Activated CD4-positive, alpha-beta memory T cell treated with anti-CD3 and anti-CD28 coated beads for 36 hours (primary cell): ENCODE measurements at regions of chr6 and their contacts with region 1.

Region 1: DNA sequence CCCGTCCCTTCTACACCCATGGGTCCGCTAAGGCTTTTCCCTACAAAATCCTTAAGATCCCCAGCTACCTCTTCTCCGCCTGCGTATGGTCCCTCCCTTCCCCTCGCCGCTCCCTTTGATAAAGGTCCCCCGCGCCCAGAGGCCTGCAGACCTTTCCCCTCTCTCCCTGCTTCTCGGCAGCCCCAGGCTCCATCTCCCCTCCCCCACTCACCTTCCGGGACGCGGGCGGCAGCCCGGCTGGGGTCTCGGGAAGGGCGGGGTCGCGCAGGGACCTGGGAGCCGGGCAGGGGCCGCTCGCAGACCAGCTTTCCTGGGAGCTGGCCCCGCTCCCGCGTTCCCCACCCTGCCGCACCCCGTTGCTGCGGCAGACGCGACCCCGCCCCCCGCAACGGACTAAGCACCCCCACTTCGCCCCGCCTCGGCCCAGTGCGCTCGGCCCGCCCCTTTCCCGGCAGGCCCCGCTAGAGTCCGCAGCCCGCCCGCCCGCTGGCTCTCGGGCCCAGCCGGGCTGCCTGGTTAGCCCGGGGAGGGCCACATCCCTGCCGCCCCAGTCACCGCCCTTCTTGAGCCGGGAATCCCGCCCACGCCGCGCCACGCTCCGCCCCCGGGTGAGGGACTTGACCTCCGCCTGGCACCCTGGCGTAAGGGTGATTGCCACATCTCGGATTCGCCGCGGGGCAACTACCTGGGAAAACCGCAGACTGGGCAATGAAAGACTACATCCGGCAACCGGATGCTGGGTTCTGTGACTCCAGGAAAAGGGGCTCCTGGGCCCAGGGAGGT is at the start of gene FLOT1:
- DNase-seq: peak; percentile 99
- H3K4me3 Mint-ChIP-seq: peak within 1 kb of the TSS; percentile 99
- H3K27ac Mint-ChIP-seq: peak within 1 kb of the TSS; percentile 97
- H3K4me1 Mint-ChIP-seq: peaks cover 62% of the 10 kb centered on the region
- H3K27me3 Mint-ChIP-seq: no peaks in the 10 kb centered on the region
- total RNA-seq, gene FLOT1: 226 to 231 TPM

Region 2: DNA sequence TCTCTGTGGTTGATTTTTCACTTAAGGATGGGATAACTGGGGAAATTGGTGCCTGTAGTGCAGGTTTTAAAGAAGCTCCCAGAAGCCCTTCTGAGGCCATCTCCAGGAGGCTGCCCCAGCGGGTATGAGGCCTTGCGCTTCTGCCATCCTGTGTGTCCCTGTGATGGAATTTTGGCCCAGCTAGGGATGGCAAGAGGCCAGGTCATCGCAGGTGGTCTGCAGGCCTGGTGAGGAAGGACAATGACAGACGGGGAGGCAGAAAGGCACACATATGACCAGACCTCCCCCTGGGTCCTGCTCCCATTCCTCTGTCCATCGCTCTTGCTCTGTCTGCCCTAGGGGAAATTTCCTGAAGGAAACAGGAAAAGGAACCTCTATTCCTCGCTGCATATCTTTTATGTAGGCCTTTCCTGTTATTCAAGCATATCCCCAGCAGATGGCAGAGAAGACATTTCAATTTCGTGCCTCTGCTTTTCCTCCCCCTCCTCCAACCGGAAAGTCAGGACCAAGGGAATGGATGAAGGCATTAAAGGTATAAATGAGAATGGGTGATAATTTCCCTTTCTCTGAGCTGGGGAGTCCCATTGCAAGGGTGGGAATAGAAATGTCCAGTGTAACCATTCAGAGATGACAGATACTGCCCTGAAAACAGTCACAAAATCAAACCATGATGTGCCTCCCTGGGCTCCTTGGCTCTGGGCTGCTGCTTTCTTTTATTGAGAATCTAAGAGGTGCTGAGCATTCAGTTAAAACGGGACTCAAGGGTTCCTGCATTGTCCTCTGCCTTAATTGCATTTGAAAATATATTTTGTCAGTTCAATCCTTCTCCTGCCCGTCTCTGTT is 1036.9 kb before region 1 on chr6:
- CTCF ChIA-PET with region 1: no interaction called
- POLR2A ChIA-PET with region 1: no interaction called
- intact Hi-C with region 1: no loop called
- DNase-seq: no peak
- H3K4me3 Mint-ChIP-seq: peak overlapping the region; percentile 6
- H3K27ac Mint-ChIP-seq: no peak overlapping the region
- H3K4me1 Mint-ChIP-seq: peaks cover 50% of the 10 kb centered on the region
- H3K27me3 Mint-ChIP-seq: peaks cover 13% of the 10 kb centered on the region

Region 3: DNA sequence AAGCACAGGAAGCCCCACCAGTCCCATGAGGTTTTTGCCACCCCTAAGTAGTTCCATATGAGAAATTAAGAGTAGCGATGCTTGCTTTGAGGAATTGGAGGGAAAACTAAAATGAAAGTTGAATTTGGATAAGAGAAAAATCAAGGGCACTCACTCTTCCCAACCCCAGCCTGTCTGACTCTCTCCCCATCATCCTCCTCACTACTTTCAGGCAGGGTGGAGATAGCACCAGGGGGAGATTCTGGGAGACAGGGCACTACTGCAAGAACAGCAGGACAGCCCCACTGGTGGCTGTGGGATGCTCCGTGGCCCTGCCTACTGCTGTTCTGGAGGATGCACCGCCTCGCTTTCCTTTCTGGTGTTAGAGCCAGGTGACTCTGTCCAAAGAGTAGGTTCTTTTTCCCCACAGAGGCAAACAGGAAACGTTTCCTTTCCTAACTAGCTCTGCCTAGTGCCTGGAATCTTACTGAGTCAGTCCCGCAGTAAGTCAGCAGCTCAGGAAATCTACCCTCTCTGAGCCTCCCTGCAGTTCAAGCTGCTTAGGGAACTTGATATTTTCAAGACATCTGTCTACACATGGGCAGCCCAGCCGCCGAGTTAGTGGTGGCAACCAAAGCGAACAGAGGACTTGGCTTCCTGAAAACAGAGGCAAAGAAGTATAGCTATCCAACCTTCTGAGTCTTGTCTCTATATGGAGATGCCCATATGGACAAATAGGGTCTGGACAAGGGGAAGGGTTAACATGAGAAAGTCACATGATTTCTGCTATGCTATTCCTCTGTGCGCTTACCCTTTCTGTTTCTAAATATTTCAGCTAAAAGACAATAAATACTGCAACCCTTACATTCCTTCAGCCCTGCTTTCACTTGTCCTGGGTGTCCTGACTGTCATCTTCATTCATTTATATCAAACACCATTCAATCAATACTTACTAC is 241.8 kb before region 1 on chr6:
- CTCF ChIA-PET with region 1: no interaction called
- POLR2A ChIA-PET with region 1: no interaction called
- intact Hi-C with region 1: no loop called
- DNase-seq: no peak
- H3K4me3 Mint-ChIP-seq: peak overlapping the region; percentile 64
- H3K27ac Mint-ChIP-seq: peak overlapping the region; percentile 58
- H3K4me1 Mint-ChIP-seq: peaks cover 43% of the 10 kb centered on the region
- H3K27me3 Mint-ChIP-seq: no peaks in the 10 kb centered on the region

Region 4: GRCh38 chr6:30678964-30679726 is 63.4 kb before region 1 on chr6:
- CTCF ChIA-PET with region 1: interaction called, 628 read pairs
- POLR2A ChIA-PET with region 1: interaction called, 5 read pairs
- intact Hi-C with region 1: loop called (anchors 1 kb)
- DNase-seq: peak; percentile 94
- H3K4me3 Mint-ChIP-seq: peak overlapping the region; percentile 100
- H3K27ac Mint-ChIP-seq: peak overlapping the region; percentile 99
- H3K4me1 Mint-ChIP-seq: peaks cover 16% of the 10 kb centered on the region
- H3K27me3 Mint-ChIP-seq: no peaks in the 10 kb centered on the region

Region 5: GRCh38 chr6:30787954-30788353 is 45.4 kb after region 1 on chr6:
- CTCF ChIA-PET with region 1: interaction called, 3 read pairs
- POLR2A ChIA-PET with region 1: interaction called, 14 read pairs
- intact Hi-C with region 1: loop called (anchors 2 kb)
- DNase-seq: peak; percentile 58
- H3K4me3 Mint-ChIP-seq: peak overlapping the region; percentile 48
- H3K27ac Mint-ChIP-seq: peak overlapping the region; percentile 89
- H3K4me1 Mint-ChIP-seq: peaks cover 61% of the 10 kb centered on the region
- H3K27me3 Mint-ChIP-seq: no peaks in the 10 kb centered on the region

Region 6: DNA sequence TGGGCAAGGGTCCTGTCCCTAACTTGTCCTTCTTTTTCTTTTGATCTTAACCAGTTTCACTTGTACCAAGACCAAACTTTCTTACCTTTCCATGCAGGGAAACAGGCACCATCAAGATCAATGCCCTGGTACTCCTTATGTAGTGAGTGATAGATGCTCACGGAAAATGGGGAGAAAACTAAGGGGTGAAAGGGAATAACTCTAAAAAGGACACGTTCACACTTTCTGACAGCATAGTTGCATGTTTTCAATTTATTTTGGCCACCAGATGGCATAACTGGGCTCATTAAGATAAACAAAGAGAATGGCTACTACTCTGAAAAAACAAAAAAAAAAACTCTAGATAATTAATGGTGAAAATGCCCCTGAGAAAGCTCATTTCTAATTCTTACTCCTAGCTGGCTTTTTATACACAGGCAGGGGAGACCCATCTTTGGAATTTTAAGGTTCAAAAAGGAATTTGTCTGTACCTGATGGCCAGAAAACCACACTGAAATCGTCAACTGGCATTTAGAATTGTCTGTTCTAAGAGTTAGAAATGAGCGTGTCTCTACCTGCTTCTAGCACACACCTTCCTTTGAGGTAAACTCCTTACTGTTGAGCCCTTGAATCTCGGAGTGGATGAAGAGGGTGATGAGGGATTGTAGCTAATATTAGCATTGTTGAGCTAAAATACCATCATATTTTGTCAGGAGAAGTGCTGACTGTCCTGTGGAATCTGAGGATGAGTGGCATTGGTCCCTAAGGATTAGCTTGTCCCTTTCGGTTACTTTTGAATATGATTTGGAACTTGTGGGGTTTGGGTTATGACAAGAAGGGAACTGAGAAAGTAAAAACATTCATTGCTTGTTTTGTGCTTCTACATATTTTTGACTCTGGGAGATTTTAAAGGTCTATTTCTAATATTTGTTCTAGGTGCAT is 79.6 kb after region 1 on chr6:
- CTCF ChIA-PET with region 1: interaction called, 10 read pairs
- POLR2A ChIA-PET with region 1: interaction called, 26 read pairs
- intact Hi-C with region 1: no loop called
- DNase-seq: no peak
- H3K4me3 Mint-ChIP-seq: no peak overlapping the region
- H3K27ac Mint-ChIP-seq: peak overlapping the region; percentile 78
- H3K4me1 Mint-ChIP-seq: peaks cover 76% of the 10 kb centered on the region
- H3K27me3 Mint-ChIP-seq: no peaks in the 10 kb centered on the region

Region 7: GRCh38 chr6:30877419-30878371 is 135.2 kb after region 1 on chr6:
- CTCF ChIA-PET with region 1: no interaction called
- POLR2A ChIA-PET with region 1: no interaction called
- intact Hi-C with region 1: loop called (anchors 1 kb)
- DNase-seq: peak; percentile 83
- H3K4me3 Mint-ChIP-seq: peak overlapping the region; percentile 62
- H3K27ac Mint-ChIP-seq: peak overlapping the region; percentile 78
- H3K4me1 Mint-ChIP-seq: peaks cover 20% of the 10 kb centered on the region
- H3K27me3 Mint-ChIP-seq: no peaks in the 10 kb centered on the region

Region 8: GRCh38 chr6:31031095-31031494 is 288.6 kb after region 1 on chr6:
- CTCF ChIA-PET with region 1: no interaction called
- POLR2A ChIA-PET with region 1: no interaction called
- intact Hi-C with region 1: no loop called
- DNase-seq: peak; percentile 27
- H3K4me3 Mint-ChIP-seq: no peak overlapping the region
- H3K27ac Mint-ChIP-seq: no peak overlapping the region
- H3K4me1 Mint-ChIP-seq: no peaks in the 10 kb centered on the region
- H3K27me3 Mint-ChIP-seq: peaks cover 8% of the 10 kb centered on the region